ENCODE measurements at regions of chr1 and their contacts with region 1.

Region 1: DNA sequence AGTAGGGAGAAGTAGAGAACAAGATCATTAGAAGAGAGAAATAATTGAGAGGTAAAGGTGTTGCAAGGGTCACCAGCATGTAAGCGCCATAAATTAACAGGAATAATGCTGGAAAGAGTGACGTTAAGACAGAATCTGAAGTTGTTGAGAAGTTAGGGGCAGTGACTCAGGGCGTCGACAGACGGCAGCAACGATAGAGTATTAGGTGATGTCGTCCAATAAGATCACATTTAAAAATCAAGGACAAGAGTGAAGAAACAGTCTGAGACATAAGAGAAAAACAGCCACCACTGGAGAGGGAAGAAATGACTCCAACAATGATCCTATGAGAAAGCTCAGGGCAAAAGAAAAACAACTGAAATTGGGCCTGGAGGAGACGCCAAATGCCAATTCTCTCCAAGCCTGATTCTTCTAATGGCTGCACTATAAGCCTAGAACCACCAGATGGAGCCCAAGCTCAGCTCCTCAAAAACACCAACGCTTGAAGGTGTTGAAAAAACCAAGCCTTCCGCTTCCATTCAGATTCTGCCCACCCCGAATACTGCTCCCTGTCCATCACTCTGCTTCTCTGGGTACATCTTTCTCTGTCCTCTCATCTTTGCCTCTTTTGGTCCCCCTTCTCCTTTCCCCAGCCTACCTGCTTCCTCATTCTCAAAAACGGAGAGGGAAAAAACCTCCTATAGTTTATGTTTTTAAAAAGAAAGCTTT is 70.0 kb downstream of the LUZP1 start:
- DNase-seq: peak; percentile 72
- H3K4me3 Mint-ChIP-seq: no peak overlapping the region
- H3K27ac Mint-ChIP-seq: no peak overlapping the region
- H3K4me1 Mint-ChIP-seq: peaks cover 46% of the 10 kb centered on the region
- H3K27me3 Mint-ChIP-seq: no peaks in the 10 kb centered on the region

Region 2: DNA sequence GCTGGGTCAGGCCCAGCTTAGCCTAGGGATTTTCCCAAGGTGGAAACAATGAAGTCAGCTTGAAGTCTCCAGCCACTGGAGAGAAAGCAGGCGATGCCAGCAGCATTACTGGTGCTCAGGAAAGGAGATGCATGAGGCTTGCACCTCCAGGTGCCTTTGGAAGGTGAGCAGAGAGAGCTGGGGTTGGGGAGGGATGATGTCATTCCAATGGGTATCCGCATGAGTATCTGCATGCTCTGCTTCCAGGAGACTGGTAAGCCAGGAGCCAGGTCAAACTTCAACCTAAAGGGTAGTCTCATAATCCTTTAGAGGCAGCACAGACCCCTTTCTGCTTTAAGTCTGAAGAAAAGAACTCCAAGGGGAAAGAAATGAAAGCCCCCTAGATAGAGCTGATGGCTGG is 10.6 kb before region 1 on chr1:
- CTCF ChIA-PET with region 1: interaction called, 10 read pairs
- POLR2A ChIA-PET with region 1: no interaction called
- intact Hi-C with region 1: no loop called
- DNase-seq: no peak
- H3K4me3 Mint-ChIP-seq: no peak overlapping the region
- H3K27ac Mint-ChIP-seq: no peak overlapping the region
- H3K4me1 Mint-ChIP-seq: no peaks in the 10 kb centered on the region
- H3K27me3 Mint-ChIP-seq: no peaks in the 10 kb centered on the region

Region 3: GRCh38 chr1:23114424-23115079 is 15.9 kb after region 1 on chr1:
- CTCF ChIA-PET with region 1: interaction called, 51 read pairs
- POLR2A ChIA-PET with region 1: interaction called, 11 read pairs
- intact Hi-C with region 1: loop called (anchors 1 kb)
- DNase-seq: no peak
- H3K4me3 Mint-ChIP-seq: no peak overlapping the region
- H3K27ac Mint-ChIP-seq: peak overlapping the region; percentile 23
- H3K4me1 Mint-ChIP-seq: peaks cover 77% of the 10 kb centered on the region
- H3K27me3 Mint-ChIP-seq: no peaks in the 10 kb centered on the region

Region 4: DNA sequence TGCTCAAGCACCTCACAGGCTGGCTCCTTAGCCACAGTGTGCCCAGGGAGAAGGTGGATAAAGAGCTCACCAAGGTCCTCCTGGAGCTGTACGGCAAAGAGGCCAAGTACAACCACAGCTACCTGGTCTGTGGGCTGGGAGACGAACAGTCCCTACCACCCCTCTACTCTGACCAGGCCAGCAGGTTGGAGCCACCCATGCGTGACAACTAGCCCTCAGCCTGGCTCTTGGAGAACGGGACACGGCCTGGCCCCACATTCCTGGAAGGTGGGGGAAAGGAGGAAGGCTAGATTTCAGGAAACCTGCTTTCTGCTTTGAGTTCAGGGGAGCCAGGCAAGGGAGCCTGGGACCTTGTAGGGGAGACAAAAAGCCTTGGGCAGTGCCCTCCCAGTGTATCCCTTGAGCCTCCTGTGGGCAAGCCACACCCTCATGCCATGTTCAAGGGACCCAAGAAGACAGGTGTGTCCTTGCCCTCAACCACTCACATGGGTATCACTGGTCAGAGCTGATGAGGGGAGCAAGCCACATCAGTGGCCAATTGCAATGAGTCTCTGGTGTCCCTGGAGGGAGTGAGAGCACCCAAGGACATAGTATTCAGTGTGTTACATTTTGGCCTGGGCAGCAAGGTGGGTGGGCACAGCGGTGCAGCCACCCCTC is 42.5 kb after region 1 on chr1:
- CTCF ChIA-PET with region 1: interaction called, 11 read pairs
- POLR2A ChIA-PET with region 1: no interaction called
- intact Hi-C with region 1: no loop called
- DNase-seq: no peak
- H3K4me3 Mint-ChIP-seq: no peak overlapping the region
- H3K27ac Mint-ChIP-seq: no peak overlapping the region
- H3K4me1 Mint-ChIP-seq: peaks cover 13% of the 10 kb centered on the region
- H3K27me3 Mint-ChIP-seq: no peaks in the 10 kb centered on the region

Region 5: GRCh38 chr1:23177438-23178380 is 79.1 kb after region 1 on chr1:
- CTCF ChIA-PET with region 1: interaction called, 738 read pairs
- POLR2A ChIA-PET with region 1: interaction called, 19 read pairs
- intact Hi-C with region 1: no loop called
- DNase-seq: peak; percentile 70
- H3K4me3 Mint-ChIP-seq: peak overlapping the region; percentile 61
- H3K27ac Mint-ChIP-seq: no peak overlapping the region
- H3K4me1 Mint-ChIP-seq: peaks cover 14% of the 10 kb centered on the region
- H3K27me3 Mint-ChIP-seq: peaks cover 19% of the 10 kb centered on the region